Vagina (tissue), 2 donors: ENCODE measurements at regions of chr4 and their contacts with region 1.

Region 1: GRCh38 chr4:154551872-154552686 is 1.9 kb upstream of the PLRG1 start:
- DNase-seq: no peak
- H3K4me3 ChIP-seq: no peak overlapping the region
- H3K27ac ChIP-seq: no peak overlapping the region
- H3K4me1 ChIP-seq: peaks cover 20% of the 10 kb centered on the region
- H3K27me3 ChIP-seq: no peaks in the 10 kb centered on the region
- CTCF ChIP-seq: peak; percentile 54 to 76 (median 55)
- POLR2A ChIP-seq: no peak

Region 2: GRCh38 chr4:154779362-154779947 is 227.4 kb after region 1 on chr4:
- intact Hi-C with region 1: loop called (anchors 5 kb)
- DNase-seq: no peak
- H3K4me3 ChIP-seq: no peak overlapping the region
- H3K27ac ChIP-seq: no peak overlapping the region
- H3K4me1 ChIP-seq: no peaks in the 10 kb centered on the region
- H3K27me3 ChIP-seq: no peaks in the 10 kb centered on the region
- CTCF ChIP-seq: no peak
- POLR2A ChIP-seq: no peak